GM23248 (cell line): ENCODE measurements at regions of chr14 and their contacts with region 1.

Region 1: GRCh38 chr14:59028476-59029202 is 159.8 kb upstream of the DAAM1 start:
- DNase-seq: peak; percentile 95
- H3K4me3 ChIP-seq: peak overlapping the region; percentile 32
- H3K27ac ChIP-seq: peak overlapping the region; percentile 39
- H3K4me1 ChIP-seq: peaks cover 18% of the 10 kb centered on the region
- H3K27me3 ChIP-seq: no peaks in the 10 kb centered on the region

Region 2: DNA sequence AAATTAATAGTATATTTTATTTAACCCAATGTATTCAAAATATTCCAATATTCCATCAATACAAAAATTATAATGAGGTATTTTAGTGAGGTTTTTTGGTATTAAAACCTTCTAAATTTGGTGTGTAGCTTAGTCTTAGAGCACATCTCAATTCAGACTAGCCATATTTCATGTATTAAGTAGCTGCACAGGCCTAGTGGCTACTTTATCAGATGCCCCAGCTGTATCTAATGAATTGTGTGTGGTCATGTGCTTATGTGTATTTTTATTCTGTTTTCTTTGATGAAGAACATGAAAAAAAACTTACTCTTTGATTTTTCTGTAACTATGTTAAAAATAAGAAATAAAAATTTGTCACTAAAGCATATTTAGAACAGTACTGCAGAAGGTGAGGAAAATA is 815.5 kb before region 1 on chr14:
- in situ Hi-C with region 1: no loop called
- DNase-seq: no peak
- H3K4me3 ChIP-seq: no peak overlapping the region
- H3K27ac ChIP-seq: no peak overlapping the region
- H3K4me1 ChIP-seq: no peaks in the 10 kb centered on the region
- H3K27me3 ChIP-seq: no peaks in the 10 kb centered on the region

Region 3: GRCh38 chr14:58238252-58239243 is 790.1 kb before region 1 on chr14:
- in situ Hi-C with region 1: no loop called
- DNase-seq: peak; percentile 34
- H3K4me3 ChIP-seq: peak overlapping the region; percentile 95
- H3K27ac ChIP-seq: peak overlapping the region; percentile 36
- H3K4me1 ChIP-seq: peaks cover 15% of the 10 kb centered on the region
- H3K27me3 ChIP-seq: no peaks in the 10 kb centered on the region

Region 4: DNA sequence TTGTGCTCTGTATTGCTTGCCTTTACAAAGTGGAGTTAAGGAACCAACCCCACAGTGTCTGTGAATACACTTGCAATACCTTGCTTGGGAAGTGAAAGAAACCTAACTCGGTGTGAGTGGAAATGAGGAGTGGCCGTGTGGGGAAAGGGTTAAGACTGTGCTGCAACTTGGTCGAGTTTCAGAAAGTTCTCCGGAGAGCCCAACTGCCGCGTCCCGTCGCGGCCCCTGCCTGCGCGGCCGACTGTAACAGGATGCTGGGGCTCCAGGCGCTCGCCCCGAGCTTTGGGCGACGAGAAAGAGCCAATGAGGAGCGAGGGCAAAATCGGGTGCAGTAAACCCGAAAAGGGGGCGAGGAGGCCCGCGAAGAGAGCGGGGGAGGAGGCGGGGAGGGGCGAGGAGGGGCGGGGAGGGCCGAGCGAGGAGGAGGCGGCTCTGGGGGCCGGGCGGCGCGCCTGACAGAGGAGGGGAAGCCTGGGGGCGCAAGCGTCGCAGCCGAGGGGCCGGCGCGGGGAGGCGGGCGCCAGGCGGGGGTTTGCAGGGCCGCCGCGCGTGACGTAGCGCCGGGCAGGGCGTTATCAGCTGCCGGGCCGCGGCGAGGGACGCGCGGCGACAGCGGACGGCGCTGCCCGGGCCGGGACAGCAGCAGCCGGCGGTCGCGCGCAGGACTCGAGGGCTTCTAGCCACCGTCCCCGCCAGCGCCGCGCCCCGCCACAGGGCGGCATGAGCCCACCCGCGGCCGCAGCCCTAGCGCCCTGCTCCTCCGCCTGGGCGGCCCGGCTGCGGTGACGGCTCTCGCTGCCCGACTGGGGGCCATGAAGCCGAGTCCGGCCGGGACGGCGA is 391.0 kb before region 1 on chr14 and contains the start of gene DACT1:
- in situ Hi-C with region 1: loop called (anchors 10 kb)
- DNase-seq: peak; percentile 86
- H3K4me3 ChIP-seq: peak within 1 kb of the TSS; percentile 93
- H3K27ac ChIP-seq: peak within 1 kb of the TSS; percentile 88
- H3K4me1 ChIP-seq: peaks cover 34% of the 10 kb centered on the region
- H3K27me3 ChIP-seq: no peaks in the 10 kb centered on the region
- total RNA-seq, gene DACT1: 21.2 and 26.9 TPM in 2 replicates

Region 5: DNA sequence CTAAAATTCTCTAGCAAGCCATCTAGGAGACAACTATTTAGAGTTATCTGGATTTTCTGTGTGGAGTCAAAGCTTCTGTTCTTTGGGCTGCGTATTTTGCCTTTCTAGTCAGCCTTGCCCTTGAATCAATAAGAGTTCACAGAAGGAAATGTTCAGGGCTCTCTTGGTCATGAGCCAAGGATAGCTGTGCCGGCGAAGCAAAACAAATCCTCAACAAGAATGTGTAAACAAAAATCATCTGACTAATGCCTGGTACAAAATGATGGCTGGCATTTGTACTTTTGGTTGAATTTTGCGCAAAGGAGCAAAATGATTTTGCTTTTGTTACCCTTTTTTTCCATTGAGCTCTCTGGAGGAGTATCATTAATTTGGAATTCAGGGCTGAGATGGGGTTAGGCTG is 219.8 kb before region 1 on chr14:
- in situ Hi-C with region 1: no loop called
- DNase-seq: peak; percentile 25
- H3K4me3 ChIP-seq: no peak overlapping the region
- H3K27ac ChIP-seq: no peak overlapping the region
- H3K4me1 ChIP-seq: no peaks in the 10 kb centered on the region
- H3K27me3 ChIP-seq: no peaks in the 10 kb centered on the region

Region 6: DNA sequence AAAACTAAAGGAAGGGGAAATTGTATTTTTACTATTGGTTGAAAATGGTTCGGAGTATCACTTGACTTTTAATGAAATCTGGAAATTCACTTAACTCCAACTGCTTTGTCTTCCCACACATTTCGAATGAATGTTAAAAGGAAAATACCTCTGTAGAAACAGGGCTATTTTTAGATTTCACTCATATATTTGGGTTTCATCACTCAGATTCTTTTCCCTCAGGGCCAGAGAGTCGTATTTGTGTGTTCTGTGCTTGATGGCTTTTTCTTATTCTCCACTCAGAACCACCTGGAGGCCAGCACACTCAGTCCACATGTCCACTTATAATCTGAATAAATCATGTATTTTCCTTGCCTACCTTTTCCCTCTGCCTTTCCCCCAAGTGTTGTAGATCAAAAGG is 199.8 kb after region 1 on chr14:
- in situ Hi-C with region 1: no loop called
- DNase-seq: peak; percentile 61
- H3K4me3 ChIP-seq: no peak overlapping the region
- H3K27ac ChIP-seq: no peak overlapping the region
- H3K4me1 ChIP-seq: peaks cover 11% of the 10 kb centered on the region
- H3K27me3 ChIP-seq: no peaks in the 10 kb centered on the region

Region 7: DNA sequence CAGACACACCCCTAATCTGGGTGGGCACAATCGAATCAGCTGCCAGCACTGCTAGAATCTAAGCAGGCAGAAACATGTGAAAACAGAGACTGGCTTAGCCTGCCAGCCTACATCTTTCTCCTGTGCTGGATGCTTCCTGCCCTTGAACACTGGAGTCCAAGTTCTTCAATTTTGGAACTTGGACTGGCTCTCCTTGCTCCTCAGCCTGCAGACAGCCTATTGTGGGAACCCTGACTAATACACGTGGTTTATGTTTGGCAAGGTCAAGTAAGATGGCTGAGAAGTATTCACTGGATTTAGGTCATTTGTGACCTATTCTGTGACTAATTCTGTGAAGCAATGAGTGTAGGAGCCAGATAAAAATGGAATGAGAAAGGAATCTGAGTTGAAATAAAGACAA is 425.5 kb after region 1 on chr14:
- in situ Hi-C with region 1: loop called (anchors 10 kb)
- DNase-seq: peak; percentile 96
- H3K4me3 ChIP-seq: 0 out of 2 replicates have a peak overlapping the region, but pooled peaks have one; percentile 33
- H3K27ac ChIP-seq: peak overlapping the region; percentile 87
- H3K4me1 ChIP-seq: peaks cover 41% of the 10 kb centered on the region
- H3K27me3 ChIP-seq: no peaks in the 10 kb centered on the region